ENCODE measurements at regions of chr11 and their contacts with region 1.

Region 1: DNA sequence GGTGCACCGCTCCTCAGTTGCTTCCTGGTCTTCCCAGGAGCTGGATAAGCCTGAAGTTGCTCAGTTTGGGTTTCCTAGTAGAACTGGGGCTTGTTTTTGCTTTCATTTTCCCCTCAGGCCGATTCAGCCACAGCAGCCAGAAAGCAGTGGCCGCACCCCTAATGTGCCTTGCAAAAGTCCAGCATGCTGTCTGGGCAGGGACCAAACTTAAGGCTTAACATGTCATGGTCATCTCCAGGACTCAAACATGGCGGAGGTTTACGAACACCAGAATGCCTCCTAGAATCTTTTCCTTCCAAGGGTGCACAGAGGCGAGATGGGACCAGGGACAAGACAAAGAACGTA is 2.5 kb downstream of the GNG3 start:
- DNase-seq: no peak

Region 2: GRCh38 chr11:62508268-62509058 is 201.5 kb before region 1 on chr11:
- in situ Hi-C with region 1: no loop called
- DNase-seq: peak; percentile 86

Region 3: GRCh38 chr11:62573592-62574362 is 136.2 kb before region 1 on chr11 and contains the start of gene EEF1G:
- in situ Hi-C with region 1: no loop called
- DNase-seq: peak; percentile 99

Region 4: GRCh38 chr11:62671575-62672389 is 38.2 kb before region 1 on chr11 and contains the starts of genes LBHD1 and UQCC3:
- in situ Hi-C with region 1: loop called (anchors 5 kb)
- DNase-seq: peak; percentile 78

Measured in ACHN (cell line).